Panc1 (cell line): ENCODE measurements at regions of chr1 and their contacts with region 1.

Region 1: DNA sequence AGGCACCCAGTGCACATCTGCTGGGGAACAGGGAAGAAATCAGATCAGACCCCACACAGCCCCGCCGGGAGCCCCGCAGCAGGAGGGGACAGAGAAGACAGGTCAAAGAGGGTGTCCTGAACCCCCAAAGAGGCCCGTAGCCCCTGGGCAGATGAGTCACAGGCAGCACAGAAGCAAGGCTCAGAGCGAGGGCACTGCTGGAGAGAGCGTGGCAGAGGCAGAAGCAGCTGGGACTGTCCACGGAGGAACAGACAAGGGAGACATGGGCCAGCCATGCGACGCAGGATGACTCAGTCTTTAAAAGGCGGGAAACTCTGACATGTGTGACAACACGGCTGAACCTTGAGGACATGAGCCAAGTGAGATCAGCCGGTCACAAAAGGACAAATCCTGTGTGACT is 14.5 kb upstream of the PRDM16 start:
- DNase-seq: no peak
- ATAC-seq: 0 out of 2 replicates have a peak, but pooled peaks have one; percentile 35
- H3K4me3 ChIP-seq: no peak overlapping the region
- H3K27ac ChIP-seq: no peak overlapping the region
- H3K4me1 ChIP-seq: no peaks in the 10 kb centered on the region; the same call in 1 of the 2 replicates
- H3K27me3 ChIP-seq: no peaks in the 10 kb centered on the region
- CTCF ChIP-seq: no peak

Region 2: GRCh38 chr1:2494323-2494693 is 560.2 kb before region 1 on chr1:
- CTCF ChIA-PET with region 1: no interaction called
- POLR2A ChIA-PET with region 1: no interaction called
- in situ Hi-C with region 1: no loop called
- intact Hi-C with region 1: loop called (anchors 10 kb)
- DNase-seq: peak; percentile 45
- ATAC-seq: peak; percentile 71
- H3K4me3 ChIP-seq: no peak overlapping the region
- H3K27ac ChIP-seq: peak overlapping the region; percentile 48; the same call in 1 of the 2 replicates
- H3K4me1 ChIP-seq: peaks cover 22% of the 10 kb centered on the region
- H3K27me3 ChIP-seq: no peaks in the 10 kb centered on the region
- CTCF ChIP-seq: no peak